ENCODE measurements at regions of chr1 and their contacts with region 1.

Region 1: DNA sequence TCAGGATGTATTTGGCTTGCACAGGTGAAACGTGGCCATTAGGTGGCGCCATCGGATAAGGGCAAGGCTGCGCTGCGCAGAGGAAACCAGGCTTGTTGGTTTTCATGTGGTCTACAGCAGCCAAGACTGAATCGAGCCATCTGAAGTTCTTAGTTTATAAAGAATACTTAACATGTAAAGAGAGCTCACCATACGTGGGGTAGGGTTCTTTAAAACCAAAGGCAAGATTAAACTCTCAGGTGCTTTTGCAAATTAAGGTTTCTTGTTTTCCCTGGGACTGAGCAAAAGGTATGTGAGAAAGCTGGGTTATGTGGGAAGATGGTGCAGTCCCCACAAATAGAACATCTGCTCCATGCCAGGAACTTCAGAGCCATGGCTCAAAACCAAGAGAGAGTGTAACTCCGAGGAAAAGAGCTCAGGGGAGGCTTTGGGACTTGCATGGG is 9.3 kb downstream of the MASP2 start:
- DNase-seq: peak; percentile 45
- H3K4me3 ChIP-seq: no peak overlapping the region
- CTCF ChIP-seq: peak; percentile 92

Region 2: DNA sequence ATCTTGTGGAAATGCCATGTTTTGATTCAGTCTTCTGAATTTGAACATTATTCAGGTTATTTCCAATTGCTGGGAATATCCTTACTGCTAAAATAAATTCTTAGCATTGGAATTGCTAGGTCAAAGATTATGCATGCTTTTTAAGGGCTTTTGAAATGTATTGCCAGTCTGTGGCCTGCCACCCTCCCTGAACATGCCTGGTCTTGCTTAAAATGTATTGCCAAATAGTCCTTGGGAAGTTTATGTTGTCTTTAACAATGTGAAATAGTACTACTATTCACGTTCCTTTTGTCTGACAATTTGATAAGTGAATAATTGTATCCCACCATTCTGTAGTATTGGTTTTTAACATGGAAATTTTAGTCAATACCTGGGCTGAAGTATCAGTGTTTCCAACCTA is 11.7 kb before region 1 on chr1:
- CTCF ChIA-PET with region 1: interaction called, 33 read pairs
- POLR2A ChIA-PET with region 1: no interaction called
- DNase-seq: no peak
- H3K4me3 ChIP-seq: no peak overlapping the region
- CTCF ChIP-seq: no peak

Region 3: GRCh38 chr1:11078631-11079030 is 40.9 kb after region 1 on chr1:
- CTCF ChIA-PET with region 1: interaction called, 29 read pairs
- POLR2A ChIA-PET with region 1: no interaction called
- DNase-seq: peak; percentile 53
- H3K4me3 ChIP-seq: no peak overlapping the region
- CTCF ChIP-seq: no peak

Region 4: GRCh38 chr1:11188381-11188780 is 150.6 kb after region 1 on chr1:
- CTCF ChIA-PET with region 1: interaction called, 22 read pairs
- POLR2A ChIA-PET with region 1: no interaction called
- DNase-seq: no peak
- H3K4me3 ChIP-seq: no peak overlapping the region
- CTCF ChIP-seq: no peak

Region 5: GRCh38 chr1:11227106-11228077 is 189.6 kb after region 1 on chr1:
- CTCF ChIA-PET with region 1: interaction called, 24 read pairs
- POLR2A ChIA-PET with region 1: no interaction called
- DNase-seq: no peak
- H3K4me3 ChIP-seq: no peak overlapping the region
- CTCF ChIP-seq: no peak

Region 6: DNA sequence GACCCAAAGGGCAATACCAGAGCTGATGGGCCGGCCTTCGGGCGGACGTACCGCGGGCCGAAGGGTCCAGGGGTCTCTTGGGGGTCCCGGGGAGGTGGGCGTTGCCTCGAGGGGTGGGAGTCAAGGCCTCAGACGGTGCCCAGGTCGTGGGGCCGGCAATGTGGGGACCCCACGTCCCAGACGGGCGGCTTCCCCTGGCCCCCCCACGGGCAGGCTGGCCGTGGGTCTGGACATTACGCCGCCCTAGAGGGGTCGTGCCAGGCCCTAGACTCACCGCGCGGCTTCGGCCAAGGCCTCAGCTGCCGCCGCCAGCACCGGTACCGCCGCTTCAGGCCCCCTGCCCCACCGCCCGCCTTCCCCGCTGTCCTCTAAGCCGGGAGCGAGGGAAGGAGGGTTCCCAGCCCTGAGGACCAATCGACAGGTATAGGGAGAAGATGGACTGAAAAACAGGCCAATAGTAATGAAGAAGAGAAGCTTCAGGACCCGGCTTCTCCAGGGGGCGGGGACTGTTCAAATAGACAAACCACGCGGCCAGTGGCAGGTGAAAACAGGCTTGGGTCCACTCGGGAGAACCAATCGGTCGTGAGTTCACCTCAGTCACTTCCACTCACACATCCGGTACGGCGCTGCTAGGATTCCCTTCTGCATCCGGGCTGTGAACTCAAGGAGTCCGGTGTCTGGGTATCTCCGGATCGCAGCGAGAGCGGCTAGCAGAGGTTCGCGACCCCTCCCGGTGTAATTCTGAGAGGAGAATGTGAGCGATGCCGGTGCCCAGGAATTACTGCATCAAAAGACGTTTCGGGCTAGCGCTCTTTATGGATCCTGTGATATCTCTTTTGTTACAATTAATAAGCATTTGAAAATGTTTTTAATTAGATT is 224.6 kb after region 1 on chr1 and contains the start of gene MTOR:
- CTCF ChIA-PET with region 1: interaction called, 14 read pairs
- POLR2A ChIA-PET with region 1: no interaction called
- DNase-seq: peak; percentile 98
- H3K4me3 ChIP-seq: peak within 1 kb of the TSS; percentile 89
- CTCF ChIP-seq: peak; percentile 29

Region 7: GRCh38 chr1:11719313-11720032 is 681.7 kb after region 1 on chr1:
- CTCF ChIA-PET with region 1: interaction called, 29 read pairs
- POLR2A ChIA-PET with region 1: no interaction called
- DNase-seq: no peak
- H3K4me3 ChIP-seq: peak overlapping the region; percentile 42
- CTCF ChIP-seq: peak; percentile 90

Measured in AG04449 (cell line).